Activated naive CD4-positive, alpha-beta T cell treated with anti-CD3 and anti-CD28 coated beads for 36 hours (primary cell): ENCODE measurements at regions of chr6 and their contacts with region 1.

Region 1: GRCh38 chr6:107459283-107460082 is at the start of gene PDSS2:
- DNase-seq: peak; percentile 100
- H3K4me3 Mint-ChIP-seq: peak within 1 kb of the TSS; percentile 80
- H3K27ac Mint-ChIP-seq: peak within 1 kb of the TSS; percentile 87
- H3K4me1 Mint-ChIP-seq: peaks cover 19% of the 10 kb centered on the region
- H3K27me3 Mint-ChIP-seq: no peaks in the 10 kb centered on the region
- total RNA-seq, gene PDSS2: 10.5 to 11.3 TPM

Region 2: GRCh38 chr6:106677282-106677681 is 782.2 kb before region 1 on chr6:
- CTCF ChIA-PET with region 1: no interaction called
- intact Hi-C with region 1: no loop called
- DNase-seq: no peak
- H3K4me3 Mint-ChIP-seq: no peak overlapping the region
- H3K27ac Mint-ChIP-seq: no peak overlapping the region
- H3K4me1 Mint-ChIP-seq: no peaks in the 10 kb centered on the region
- H3K27me3 Mint-ChIP-seq: no peaks in the 10 kb centered on the region

Region 3: GRCh38 chr6:107033126-107033525 is 426.4 kb before region 1 on chr6:
- CTCF ChIA-PET with region 1: no interaction called
- intact Hi-C with region 1: loop called (anchors 1 kb)
- DNase-seq: no peak
- H3K4me3 Mint-ChIP-seq: no peak overlapping the region
- H3K27ac Mint-ChIP-seq: no peak overlapping the region
- H3K4me1 Mint-ChIP-seq: peaks cover 42% of the 10 kb centered on the region
- H3K27me3 Mint-ChIP-seq: no peaks in the 10 kb centered on the region

Region 4: GRCh38 chr6:107318100-107318736 is 141.3 kb before region 1 on chr6:
- CTCF ChIA-PET with region 1: interaction called, 14 read pairs
- intact Hi-C with region 1: loop called (anchors 1 kb)
- DNase-seq: peak; percentile 62
- H3K4me3 Mint-ChIP-seq: no peak overlapping the region
- H3K27ac Mint-ChIP-seq: no peak overlapping the region
- H3K4me1 Mint-ChIP-seq: peaks cover 17% of the 10 kb centered on the region
- H3K27me3 Mint-ChIP-seq: no peaks in the 10 kb centered on the region

Region 5: DNA sequence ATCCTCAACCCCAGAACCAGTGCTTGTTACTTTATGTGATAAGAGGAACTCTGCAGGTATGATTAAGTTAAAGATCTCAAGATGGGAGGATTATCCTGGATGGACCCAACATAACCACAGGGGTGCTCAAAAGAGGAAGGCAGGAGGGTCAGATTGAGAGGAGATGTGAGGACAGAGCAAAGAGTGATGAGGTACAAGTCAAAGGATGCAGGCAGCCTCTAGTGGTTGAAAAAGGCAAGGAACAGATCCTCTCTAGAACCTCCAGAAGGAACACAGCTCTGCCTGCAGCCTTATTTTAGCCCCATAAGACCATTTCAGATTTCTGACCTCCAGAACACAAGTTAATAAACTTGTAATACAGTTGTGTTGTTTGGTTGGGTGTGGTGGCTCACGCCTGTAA is 41.4 kb before region 1 on chr6:
- CTCF ChIA-PET with region 1: no interaction called
- intact Hi-C with region 1: no loop called
- DNase-seq: no peak
- H3K4me3 Mint-ChIP-seq: no peak overlapping the region
- H3K27ac Mint-ChIP-seq: no peak overlapping the region
- H3K4me1 Mint-ChIP-seq: peaks cover 4% of the 10 kb centered on the region
- H3K27me3 Mint-ChIP-seq: no peaks in the 10 kb centered on the region

Region 6: GRCh38 chr6:107489636-107490565 is 30.4 kb after region 1 on chr6 and contains the start of gene SOBP:
- CTCF ChIA-PET with region 1: interaction called, 3 read pairs
- intact Hi-C with region 1: loop called (anchors 1 kb)
- DNase-seq: peak; percentile 28
- H3K4me3 Mint-ChIP-seq: peak within 1 kb of the TSS; percentile 80
- H3K27ac Mint-ChIP-seq: no peak within 1 kb of the TSS
- H3K4me1 Mint-ChIP-seq: peaks cover 12% of the 10 kb centered on the region
- H3K27me3 Mint-ChIP-seq: peaks cover 46% of the 10 kb centered on the region
- total RNA-seq, gene SOBP: 0.25 to 0.26 TPM

Region 7: GRCh38 chr6:107716688-107717089 is 257.2 kb after region 1 on chr6:
- CTCF ChIA-PET with region 1: no interaction called
- intact Hi-C with region 1: loop called (anchors 5 kb)
- DNase-seq: peak; percentile 89
- H3K4me3 Mint-ChIP-seq: peak overlapping the region; percentile 71
- H3K27ac Mint-ChIP-seq: peak overlapping the region; percentile 93
- H3K4me1 Mint-ChIP-seq: peaks cover 65% of the 10 kb centered on the region
- H3K27me3 Mint-ChIP-seq: no peaks in the 10 kb centered on the region

Region 8: DNA sequence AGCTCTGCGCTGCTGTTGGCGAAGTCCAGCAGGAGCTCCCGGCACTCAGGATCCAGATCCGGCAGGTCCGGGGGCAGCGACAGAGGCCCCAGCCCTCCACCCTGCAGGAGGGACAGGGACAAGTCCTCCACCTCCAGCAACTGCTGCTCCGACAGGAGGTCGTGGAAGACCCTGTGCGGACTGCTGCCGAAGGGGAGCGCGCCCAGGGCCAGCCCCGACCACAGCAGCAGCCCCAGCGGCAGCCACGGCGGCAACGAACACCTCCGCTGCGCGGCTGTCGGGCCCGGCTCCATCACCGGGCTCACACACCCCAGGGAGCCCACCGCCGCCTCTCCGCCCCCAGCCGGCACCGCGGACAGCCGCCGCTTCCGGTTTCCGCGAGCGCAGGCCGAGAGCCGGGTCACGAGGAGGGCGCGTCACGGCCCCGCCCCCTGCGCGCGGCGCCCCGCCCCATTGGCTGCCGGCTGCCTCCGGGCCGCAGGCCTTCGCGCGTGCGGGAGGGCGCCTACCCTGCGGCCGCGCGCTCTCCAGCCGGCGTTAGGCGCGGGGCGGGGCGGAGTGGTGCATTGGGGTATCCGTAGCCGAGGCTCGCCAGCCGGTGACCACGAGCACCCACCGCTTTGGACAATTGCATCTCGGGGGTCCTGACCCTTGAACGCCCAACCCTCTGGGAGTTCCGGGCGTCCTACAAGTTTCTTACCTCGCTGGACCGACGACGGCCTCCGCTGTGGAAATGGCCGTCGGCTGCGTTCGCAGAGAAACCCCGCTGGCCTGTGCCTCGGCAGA is 615.1 kb after region 1 on chr6 and contains the start of gene OSTM1:
- CTCF ChIA-PET with region 1: no interaction called
- intact Hi-C with region 1: loop called (anchors 5 kb)
- DNase-seq: peak; percentile 93
- H3K4me3 Mint-ChIP-seq: peak within 1 kb of the TSS; percentile 80
- H3K27ac Mint-ChIP-seq: peak within 1 kb of the TSS; percentile 78
- H3K4me1 Mint-ChIP-seq: peaks cover 30% of the 10 kb centered on the region
- H3K27me3 Mint-ChIP-seq: no peaks in the 10 kb centered on the region
- total RNA-seq, gene OSTM1: 7.1 to 7.5 TPM